CD14-positive monocyte (primary cell): ENCODE measurements at regions of chr12 and their contacts with region 1.

Region 1: GRCh38 chr12:12327802-12328201 is 22.2 kb downstream of the MANSC1 start:
- DNase-seq: peak; percentile 17 to 73 (median 44)
- H3K4me3 ChIP-seq: no peak overlapping the region
- H3K4me3 Mint-ChIP-seq: no peak overlapping the region
- H3K27ac ChIP-seq: no peak overlapping the region
- H3K27ac Mint-ChIP-seq: peak overlapping the region in 1 of 7 donors; percentile 35
- H3K4me1 ChIP-seq: peaks cover 0 to 2% of the 10 kb centered on the region in 2 donors
- H3K4me1 Mint-ChIP-seq: peaks cover 2% of the 10 kb centered on the region
- H3K27me3 ChIP-seq: no peaks in the 10 kb centered on the region
- H3K27me3 Mint-ChIP-seq: peaks cover 0 to 3% (median 2%) of the 10 kb centered on the region in 3 donors
- CTCF ChIP-seq: peak; percentile 77

Region 2: GRCh38 chr12:11553871-11554533 is 773.8 kb before region 1 on chr12:
- intact Hi-C with region 1: loop called (anchors 5 kb)
- DNase-seq: peak; percentile 38 to 65 (median 55)
- H3K4me3 ChIP-seq: no peak overlapping the region
- H3K4me3 Mint-ChIP-seq: no peak overlapping the region
- H3K27ac ChIP-seq: no peak overlapping the region
- H3K27ac Mint-ChIP-seq: no peak overlapping the region
- H3K4me1 ChIP-seq: no peaks in the 10 kb centered on the region
- H3K4me1 Mint-ChIP-seq: peaks cover 14% of the 10 kb centered on the region
- H3K27me3 ChIP-seq: no peaks in the 10 kb centered on the region
- H3K27me3 Mint-ChIP-seq: peaks cover 0 to 2% (median 2%) of the 10 kb centered on the region in 3 donors
- CTCF ChIP-seq: peak; percentile 78

Region 3: GRCh38 chr12:12415886-12416285 is 88.1 kb after region 1 on chr12:
- intact Hi-C with region 1: no loop called
- DNase-seq: no peak
- H3K4me3 ChIP-seq: no peak overlapping the region
- H3K4me3 Mint-ChIP-seq: no peak overlapping the region
- H3K27ac ChIP-seq: no peak overlapping the region
- H3K27ac Mint-ChIP-seq: no peak overlapping the region
- H3K4me1 ChIP-seq: no peaks in the 10 kb centered on the region
- H3K4me1 Mint-ChIP-seq: peaks cover 6% of the 10 kb centered on the region
- H3K27me3 ChIP-seq: no peaks in the 10 kb centered on the region
- H3K27me3 Mint-ChIP-seq: no peaks in the 10 kb centered on the region
- CTCF ChIP-seq: no peak